ENCODE measurements at regions of chr3 and their contacts with region 1.

Region 1: DNA sequence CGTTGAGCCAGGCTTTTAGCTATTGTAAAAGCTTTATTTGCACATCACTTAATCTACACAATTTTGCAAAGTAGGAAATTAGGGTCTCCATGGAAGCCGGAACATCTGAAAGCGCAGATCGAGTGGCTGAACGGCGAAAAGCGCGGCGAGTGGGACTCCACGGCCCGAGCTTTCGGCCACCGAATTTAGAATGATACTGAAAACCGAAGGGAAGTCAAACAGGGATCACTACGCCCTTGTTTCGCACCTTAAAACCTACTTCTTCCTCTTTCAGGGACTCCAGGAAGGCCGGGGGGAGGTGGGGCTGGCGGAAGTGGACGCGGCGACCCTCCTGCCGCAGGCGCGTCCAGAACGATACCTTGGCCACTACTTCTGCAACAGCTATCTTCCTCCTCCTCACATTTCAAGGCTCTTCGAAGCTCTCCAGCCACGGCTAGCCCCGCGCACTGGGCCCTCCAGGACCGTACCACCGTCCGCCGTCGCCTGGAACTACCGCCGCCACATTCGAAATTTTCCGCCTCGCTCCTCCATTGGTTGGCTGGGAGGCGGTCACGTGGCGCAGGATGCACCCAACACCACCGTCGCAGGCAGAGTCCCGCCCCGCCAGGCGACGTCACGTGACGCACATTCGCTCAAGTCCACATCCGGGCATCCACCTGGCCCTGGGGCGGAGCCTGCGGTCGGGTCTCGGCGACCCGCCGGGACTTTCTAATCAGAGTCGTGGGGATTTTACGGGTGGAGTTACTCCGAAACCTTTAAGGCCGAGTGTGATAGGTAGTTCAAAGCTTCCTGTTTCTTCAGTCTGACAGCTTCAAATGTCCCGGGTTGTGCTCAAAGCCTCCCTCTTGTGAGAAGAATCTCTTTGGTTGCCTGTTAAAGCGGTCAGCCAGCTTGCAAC is at the start of gene SGO1:
- DNase-seq: peak; percentile 91 to 98
- H3K4me3 ChIP-seq: peak within 1 kb of the TSS; percentile 93
- H3K27ac ChIP-seq: peak within 1 kb of the TSS; percentile 88
- H3K4me1 ChIP-seq: peaks cover 27% of the 10 kb centered on the region
- H3K27me3 ChIP-seq: no peaks in the 10 kb centered on the region
- CTCF ChIP-seq: no peak
- total RNA-seq, gene SGO1: 18.3 and 26.3 TPM in 2 replicates

Region 2: GRCh38 chr3:19946832-19947548 is 239.0 kb before region 1 on chr3 and contains the start of gene RAB5A:
- CTCF ChIA-PET with region 1: no interaction called
- POLR2A ChIA-PET with region 1: no interaction called
- intact Hi-C with region 1: loop called (anchors 10 kb)
- DNase-seq: peak; percentile 91 to 96
- H3K4me3 ChIP-seq: peak within 1 kb of the TSS; percentile 69
- H3K27ac ChIP-seq: peak within 1 kb of the TSS; percentile 97
- H3K4me1 ChIP-seq: peaks cover 32% of the 10 kb centered on the region
- H3K27me3 ChIP-seq: no peaks in the 10 kb centered on the region
- CTCF ChIP-seq: no peak
- total RNA-seq, gene RAB5A: 62.7 and 65.1 TPM in 2 replicates

Region 3: GRCh38 chr3:20054549-20054987 is 131.4 kb before region 1 on chr3:
- CTCF ChIA-PET with region 1: no interaction called
- POLR2A ChIA-PET with region 1: no interaction called
- intact Hi-C with region 1: loop called (anchors 1 kb)
- DNase-seq: peak; percentile 83 to 96
- H3K4me3 ChIP-seq: no peak overlapping the region
- H3K27ac ChIP-seq: 0 out of 2 replicates have a peak overlapping the region, but pooled peaks have one; percentile 7
- H3K4me1 ChIP-seq: peaks cover 45% of the 10 kb centered on the region
- H3K27me3 ChIP-seq: no peaks in the 10 kb centered on the region
- CTCF ChIP-seq: no peak

Region 4: DNA sequence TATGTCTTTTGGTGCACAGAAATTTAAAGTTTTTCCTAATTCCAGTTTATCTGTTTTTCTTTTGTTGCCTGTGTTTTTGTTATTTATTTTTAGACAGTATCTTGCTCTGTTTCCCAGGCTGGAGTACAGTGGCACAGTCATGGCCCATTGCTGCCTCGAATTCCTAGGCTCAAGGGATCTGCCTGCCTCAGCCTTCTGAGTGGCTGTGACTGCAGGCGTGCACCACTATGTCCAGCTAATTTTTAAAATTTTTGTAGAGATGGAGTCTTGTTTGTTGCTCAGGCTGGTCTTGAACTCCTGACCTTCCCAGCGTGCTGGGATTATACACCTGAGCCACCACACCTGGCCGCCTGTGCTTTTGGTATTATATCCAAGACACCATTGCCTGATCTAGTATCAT is 123.0 kb before region 1 on chr3:
- CTCF ChIA-PET with region 1: no interaction called
- POLR2A ChIA-PET with region 1: interaction called, 10 read pairs
- intact Hi-C with region 1: no loop called
- DNase-seq: no peak
- H3K4me3 ChIP-seq: no peak overlapping the region
- H3K27ac ChIP-seq: no peak overlapping the region
- H3K4me1 ChIP-seq: peaks cover 21% of the 10 kb centered on the region
- H3K27me3 ChIP-seq: no peaks in the 10 kb centered on the region
- CTCF ChIP-seq: no peak

Region 5: DNA sequence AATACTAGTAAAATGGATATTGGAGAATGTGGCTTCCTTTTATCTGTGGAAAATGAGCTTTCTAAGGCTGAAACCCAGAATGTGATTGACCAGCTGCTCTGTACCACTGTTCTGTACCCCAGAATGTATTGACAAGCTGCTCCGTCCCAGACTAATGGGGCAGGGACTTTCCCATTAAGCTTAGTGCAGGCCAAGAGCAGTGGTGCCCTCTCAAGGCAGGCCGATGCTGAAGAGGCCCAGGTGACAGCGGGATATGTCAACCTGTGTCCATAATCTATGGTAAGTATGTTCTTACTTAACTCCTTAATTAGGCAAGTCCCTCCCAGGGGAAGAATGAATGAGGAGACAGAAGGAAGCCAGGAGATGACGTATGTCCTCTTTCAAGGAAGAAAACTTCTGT is 31.0 kb before region 1 on chr3:
- CTCF ChIA-PET with region 1: no interaction called
- POLR2A ChIA-PET with region 1: interaction called, 10 read pairs
- intact Hi-C with region 1: no loop called
- DNase-seq: no peak
- H3K4me3 ChIP-seq: no peak overlapping the region
- H3K27ac ChIP-seq: no peak overlapping the region
- H3K4me1 ChIP-seq: no peaks in the 10 kb centered on the region
- H3K27me3 ChIP-seq: no peaks in the 10 kb centered on the region
- CTCF ChIP-seq: no peak

Measured in PC-9 (cell line).